ENCODE measurements at regions of chr17 and their contacts with region 1.

Region 1: GRCh38 chr17:35540589-35541404 is 3.3 kb upstream of the SLFN12L start:
- DNase-seq: no peak
- H3K4me3 ChIP-seq: peak overlapping the region; percentile 32 to 56
- H3K27ac ChIP-seq: no peak overlapping the region
- H3K4me1 ChIP-seq: no peaks in the 10 kb centered on the region
- H3K27me3 ChIP-seq: peaks cover 17% of the 10 kb centered on the region; the same call in 1 of the 2 replicates
- CTCF ChIP-seq: no peak
- EP300 ChIP-seq: no peak
- RAD21 ChIP-seq: no peak

Region 2: DNA sequence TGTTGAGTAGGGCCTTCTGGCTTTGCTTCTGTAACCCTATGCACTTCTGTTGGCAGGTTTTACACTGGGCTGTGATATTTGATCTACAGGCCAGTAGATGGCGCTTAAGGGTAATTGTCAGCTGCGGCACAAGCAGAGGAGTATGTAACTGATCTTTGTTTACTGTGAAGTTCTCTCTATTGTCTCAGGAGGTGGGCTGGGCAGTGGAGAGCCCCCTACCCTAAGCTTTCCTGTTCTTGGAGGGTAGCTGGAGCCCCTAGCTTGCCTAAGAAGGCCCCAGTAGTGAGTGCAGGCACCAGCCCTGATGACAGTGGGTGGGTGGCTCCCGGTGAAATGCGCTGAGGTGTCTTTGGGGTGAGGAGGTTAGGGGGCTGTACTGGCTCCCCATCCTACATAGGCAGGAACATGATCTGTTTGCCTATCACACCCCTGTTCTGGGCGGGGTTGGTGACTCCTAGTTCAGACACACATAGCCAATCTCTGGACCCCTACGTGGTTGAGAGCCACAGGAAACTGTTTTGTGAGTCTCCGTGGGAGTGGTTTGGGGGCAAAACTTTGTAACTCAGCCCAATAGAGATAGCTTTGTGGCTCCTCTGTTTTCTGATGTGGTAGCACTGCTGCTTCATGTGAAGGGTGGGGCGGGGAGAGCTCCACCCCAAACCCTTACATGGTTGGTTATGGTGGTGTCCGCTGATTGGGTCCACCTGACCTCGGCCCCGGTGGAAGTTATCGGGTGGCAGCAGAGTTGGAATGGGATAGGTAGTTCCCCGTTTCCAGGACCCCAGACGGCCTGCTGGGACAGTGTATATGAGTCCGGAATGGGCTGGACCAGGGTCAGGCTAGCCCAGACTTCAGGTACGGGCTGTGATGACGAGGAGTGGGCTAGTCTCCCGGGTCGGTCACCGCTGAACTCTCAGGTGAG is 227.7 kb before region 1 on chr17:
- CTCF ChIA-PET with region 1: interaction called, 118 read pairs
- POLR2A ChIA-PET with region 1: no interaction called
- DNase-seq: peak; percentile 52
- H3K4me3 ChIP-seq: no peak overlapping the region; a peak in 1 of 4 replicates
- H3K27ac ChIP-seq: no peak overlapping the region
- H3K4me1 ChIP-seq: peaks cover 0 to 3% of the 10 kb centered on the region in 2 experiments; a peak in 1 of 4 replicates
- H3K27me3 ChIP-seq: 0 out of 2 replicates have a peak, but pooled peaks cover 12% of the 10 kb centered on the region
- CTCF ChIP-seq: peak; percentile 82
- EP300 ChIP-seq: no peak
- RAD21 ChIP-seq: peak; percentile 82

Region 3: GRCh38 chr17:35555695-35556094 is 14.9 kb after region 1 on chr17:
- CTCF ChIA-PET with region 1: interaction called, 29 read pairs
- POLR2A ChIA-PET with region 1: no interaction called
- DNase-seq: peak; percentile 26
- H3K4me3 ChIP-seq: no peak overlapping the region
- H3K27ac ChIP-seq: no peak overlapping the region
- H3K4me1 ChIP-seq: no peaks in the 10 kb centered on the region
- H3K27me3 ChIP-seq: peaks cover 60% of the 10 kb centered on the region
- CTCF ChIP-seq: peak; percentile 41
- EP300 ChIP-seq: no peak
- RAD21 ChIP-seq: peak; percentile 55

Region 4: DNA sequence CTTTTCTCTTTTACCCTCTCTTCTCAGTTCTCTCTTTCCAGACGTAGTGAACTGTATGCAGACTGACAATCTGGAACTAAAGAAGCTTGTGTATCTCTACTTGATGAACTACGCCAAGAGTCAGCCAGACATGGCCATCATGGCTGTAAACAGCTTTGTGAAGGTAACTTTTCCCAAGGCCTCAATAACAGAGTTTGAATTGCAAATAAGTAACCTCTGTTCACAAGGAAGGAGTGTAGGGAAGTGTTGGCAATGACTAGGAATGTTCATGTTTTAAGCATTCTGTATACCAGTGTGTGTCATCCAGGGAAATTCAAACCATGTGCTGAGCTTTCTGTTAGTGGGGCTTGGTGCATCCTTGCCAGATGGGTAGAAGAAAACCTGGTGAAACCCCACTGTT is 64.9 kb after region 1 on chr17:
- CTCF ChIA-PET with region 1: no interaction called
- POLR2A ChIA-PET with region 1: no interaction called
- DNase-seq: no peak
- H3K4me3 ChIP-seq: no peak overlapping the region
- H3K27ac ChIP-seq: peak overlapping the region in 1 of 2 experiments; percentile 34; a peak in 2 of 4 replicates
- H3K4me1 ChIP-seq: no peaks in the 10 kb centered on the region
- H3K27me3 ChIP-seq: no peaks in the 10 kb centered on the region
- CTCF ChIP-seq: no peak
- EP300 ChIP-seq: no peak
- RAD21 ChIP-seq: no peak